Left ventricle myocardium inferior (tissue), 1 donor: ENCODE measurements at regions of chr7 and their contacts with region 1.

Region 1: DNA sequence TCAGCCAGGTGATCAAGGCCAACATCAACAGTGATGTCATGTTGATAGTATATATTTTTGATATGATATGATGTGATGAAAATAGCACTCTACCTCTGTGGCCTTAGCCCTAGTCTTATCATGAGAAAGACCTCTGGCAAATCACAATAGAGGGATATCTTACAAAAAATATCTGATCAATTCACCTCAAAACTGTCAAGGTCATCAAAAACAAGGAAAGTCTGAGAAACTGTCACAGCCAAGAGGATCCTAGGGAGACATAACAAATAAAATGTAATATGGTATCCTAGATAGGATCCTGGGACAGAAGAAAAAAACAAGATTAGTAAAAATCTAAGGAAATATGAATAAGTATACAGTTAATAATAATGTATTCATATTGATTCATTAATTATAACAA is 92.6 kb downstream of the NRCAM start:
- DNase-seq: no peak
- H3K4me3 ChIP-seq: no peak overlapping the region
- H3K27ac ChIP-seq: no peak overlapping the region
- H3K4me1 ChIP-seq: no peaks in the 10 kb centered on the region
- H3K27me3 ChIP-seq: no peaks in the 10 kb centered on the region
- CTCF ChIP-seq: no peak

Region 2: DNA sequence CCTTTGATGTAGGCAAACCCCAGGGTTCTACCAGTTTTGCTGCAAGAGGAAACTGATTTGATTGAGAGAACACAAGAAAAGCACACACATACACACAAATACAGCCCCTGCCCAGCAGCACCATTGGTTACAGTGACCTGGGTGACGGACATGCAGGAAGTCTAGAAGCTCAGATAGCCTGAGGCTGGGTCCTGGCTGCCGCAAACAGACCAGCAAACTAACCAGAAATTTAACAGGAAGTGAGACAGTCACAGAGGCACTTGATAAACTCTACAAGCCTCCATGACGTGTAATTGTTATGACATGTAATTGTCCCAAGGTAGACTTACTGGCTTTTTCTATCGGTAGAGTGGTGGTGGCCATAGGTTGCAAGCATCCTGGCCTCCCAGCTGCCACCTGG is 1260.3 kb before region 1 on chr7:
- intact Hi-C with region 1: no loop called
- DNase-seq: no peak
- H3K4me3 ChIP-seq: no peak overlapping the region
- H3K27ac ChIP-seq: no peak overlapping the region
- H3K4me1 ChIP-seq: peaks cover 6% of the 10 kb centered on the region
- H3K27me3 ChIP-seq: no peaks in the 10 kb centered on the region
- CTCF ChIP-seq: no peak

Region 3: DNA sequence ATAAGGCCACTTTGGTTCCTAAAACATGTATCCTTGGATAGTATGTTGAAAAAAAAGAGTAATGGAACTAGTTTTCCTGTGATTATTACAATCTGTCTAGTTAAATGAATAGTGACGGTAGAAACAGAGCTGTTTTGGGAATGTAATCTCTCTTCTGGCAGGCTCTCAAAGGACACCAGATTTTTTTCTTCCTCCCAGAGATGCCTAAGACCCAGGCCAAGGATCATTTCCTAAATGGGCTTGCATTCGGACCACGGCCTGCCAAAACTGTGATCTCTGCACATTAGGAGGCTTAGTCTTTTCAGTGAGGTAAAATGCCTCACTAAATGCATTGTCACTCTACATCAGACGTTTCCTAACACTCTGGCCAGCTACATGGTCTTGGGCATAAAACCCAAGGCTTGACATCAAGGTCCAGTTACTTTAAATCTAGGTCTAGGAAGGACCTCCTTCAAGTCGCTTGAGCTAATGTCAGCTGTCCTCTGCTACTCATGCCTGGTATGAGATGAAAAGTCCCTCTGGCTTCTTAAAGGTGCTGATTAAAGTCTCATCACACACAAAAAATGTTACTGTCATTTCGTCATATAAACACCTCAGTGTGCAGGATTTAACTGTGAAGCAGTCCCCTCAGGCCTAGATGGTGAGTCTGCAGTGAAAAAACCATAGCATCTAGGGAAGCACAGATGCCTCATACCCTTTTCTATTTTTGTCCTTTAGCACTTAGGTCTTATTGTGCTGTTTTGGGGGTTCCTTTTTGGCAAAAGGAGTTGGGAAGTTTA is 425.0 kb before region 1 on chr7:
- intact Hi-C with region 1: no loop called
- DNase-seq: peak; percentile 44
- H3K4me3 ChIP-seq: no peak overlapping the region
- H3K27ac ChIP-seq: peak overlapping the region; percentile 69
- H3K4me1 ChIP-seq: peaks cover 68% of the 10 kb centered on the region
- H3K27me3 ChIP-seq: no peaks in the 10 kb centered on the region
- CTCF ChIP-seq: no peak

Region 4: DNA sequence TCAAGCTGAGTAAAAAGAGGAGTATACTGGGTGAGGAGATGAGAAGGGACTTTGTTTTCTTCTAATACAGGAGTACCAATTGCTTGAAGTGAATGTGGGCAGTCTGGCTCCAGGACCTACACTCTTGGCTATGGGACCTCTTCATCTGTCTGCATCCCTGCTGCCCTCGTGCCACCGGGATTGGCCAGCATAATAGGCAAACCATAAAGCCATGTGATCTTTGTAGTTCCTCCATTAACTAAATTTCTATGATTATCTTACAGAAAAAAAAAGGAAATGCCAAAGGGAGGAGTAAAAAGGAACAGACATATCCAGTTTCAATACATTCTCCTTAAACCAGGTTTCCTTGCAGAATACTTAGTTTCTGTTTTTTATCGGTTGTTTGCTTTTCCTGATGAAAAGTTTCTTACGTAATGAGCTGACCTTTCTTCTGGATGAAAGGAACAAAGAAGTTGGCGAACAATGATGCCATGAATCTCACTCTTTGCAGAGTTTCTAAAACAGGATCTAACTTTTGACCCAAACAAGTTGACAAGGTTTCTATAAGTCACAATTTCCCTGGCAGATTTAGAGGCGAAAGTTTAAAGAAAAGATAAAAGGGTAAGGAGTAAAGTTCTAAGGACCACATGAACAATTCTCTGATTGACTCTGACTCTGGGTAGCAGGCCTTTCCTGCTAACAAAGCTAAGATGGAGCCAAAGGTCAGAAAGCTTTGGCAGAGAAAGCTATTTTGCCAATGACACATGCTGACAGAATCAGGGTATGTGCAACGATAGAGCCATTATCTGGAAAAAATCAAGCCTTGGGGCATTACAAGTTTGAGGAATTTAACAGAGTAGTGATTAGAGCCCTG is 414.8 kb before region 1 on chr7:
- intact Hi-C with region 1: no loop called
- DNase-seq: no peak
- H3K4me3 ChIP-seq: no peak overlapping the region
- H3K27ac ChIP-seq: peak overlapping the region; percentile 59
- H3K4me1 ChIP-seq: peaks cover 76% of the 10 kb centered on the region
- H3K27me3 ChIP-seq: no peaks in the 10 kb centered on the region
- CTCF ChIP-seq: no peak

Region 5: DNA sequence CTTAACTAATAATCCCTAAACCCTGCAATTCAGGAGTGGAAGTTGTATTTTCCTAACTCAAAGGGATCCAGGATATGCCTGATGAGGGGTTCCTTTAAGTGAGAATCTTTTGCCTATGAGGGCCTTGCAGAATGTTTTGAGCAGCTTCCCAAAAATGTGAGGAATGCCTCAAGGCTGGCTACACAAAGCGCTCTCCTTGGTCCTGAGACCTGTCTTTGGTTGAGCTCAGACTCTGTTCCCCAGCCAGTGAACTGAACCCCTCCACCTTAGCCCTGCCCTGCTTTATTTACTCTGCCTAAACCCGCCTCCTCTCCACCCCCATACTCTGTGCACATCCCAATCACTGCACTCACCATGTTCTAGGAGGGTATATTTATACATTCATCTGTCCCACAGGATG is 16.0 kb before region 1 on chr7:
- intact Hi-C with region 1: loop called (anchors 1 kb)
- DNase-seq: no peak
- H3K4me3 ChIP-seq: no peak overlapping the region
- H3K27ac ChIP-seq: no peak overlapping the region
- H3K4me1 ChIP-seq: no peaks in the 10 kb centered on the region
- H3K27me3 ChIP-seq: peaks cover 7% of the 10 kb centered on the region
- CTCF ChIP-seq: no peak

Region 6: DNA sequence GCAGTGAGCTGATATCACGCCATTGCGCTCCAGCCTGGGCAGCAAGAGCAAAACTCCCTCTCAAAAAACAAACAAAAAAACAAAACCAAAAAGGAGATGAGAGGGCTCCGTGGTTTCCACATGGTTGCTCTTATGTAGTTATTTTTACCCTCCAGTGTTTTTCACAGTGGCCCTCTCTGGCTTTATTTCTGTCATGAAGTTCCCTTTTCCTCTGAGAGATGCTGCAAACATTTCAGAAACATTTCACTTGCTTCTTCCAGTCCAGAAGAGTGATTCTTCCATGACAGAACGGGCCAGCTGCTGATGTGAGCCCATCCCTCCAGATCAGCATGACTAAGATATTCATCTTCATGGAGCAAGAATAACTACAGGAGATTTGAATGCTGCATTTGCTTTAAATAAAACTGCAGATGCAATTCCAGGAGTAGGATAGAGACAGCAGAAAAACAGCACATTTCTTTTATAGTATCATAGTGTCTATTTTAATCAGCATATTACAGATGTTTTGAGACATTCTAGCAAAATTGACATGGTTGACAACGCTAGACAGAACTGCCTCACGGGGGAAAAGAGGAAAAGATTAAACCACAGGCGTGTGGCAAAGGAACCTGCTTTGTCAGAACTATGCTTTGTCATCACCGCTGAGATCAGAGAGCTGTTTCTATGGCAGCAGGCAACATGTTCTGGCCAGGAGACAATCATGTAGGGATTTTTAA is 52.3 kb after region 1 on chr7:
- intact Hi-C with region 1: no loop called
- DNase-seq: no peak
- H3K4me3 ChIP-seq: no peak overlapping the region
- H3K27ac ChIP-seq: no peak overlapping the region
- H3K4me1 ChIP-seq: no peaks in the 10 kb centered on the region
- H3K27me3 ChIP-seq: peaks cover 54% of the 10 kb centered on the region
- CTCF ChIP-seq: no peak